ENCODE measurements at regions of chr11 and their contacts with region 1.

Region 1: GRCh38 chr11:38448284-38448683 is 1850.2 kb upstream of the RAG2 start:
- DNase-seq: no peak
- H3K4me3 ChIP-seq: no peak overlapping the region
- H3K27ac ChIP-seq: no peak overlapping the region
- H3K4me1 ChIP-seq: no peaks in the 10 kb centered on the region
- H3K27me3 ChIP-seq: no peaks in the 10 kb centered on the region
- CTCF ChIP-seq: no peak
- EP300 ChIP-seq: no peak
- POLR2A ChIP-seq: no peak

Region 2: DNA sequence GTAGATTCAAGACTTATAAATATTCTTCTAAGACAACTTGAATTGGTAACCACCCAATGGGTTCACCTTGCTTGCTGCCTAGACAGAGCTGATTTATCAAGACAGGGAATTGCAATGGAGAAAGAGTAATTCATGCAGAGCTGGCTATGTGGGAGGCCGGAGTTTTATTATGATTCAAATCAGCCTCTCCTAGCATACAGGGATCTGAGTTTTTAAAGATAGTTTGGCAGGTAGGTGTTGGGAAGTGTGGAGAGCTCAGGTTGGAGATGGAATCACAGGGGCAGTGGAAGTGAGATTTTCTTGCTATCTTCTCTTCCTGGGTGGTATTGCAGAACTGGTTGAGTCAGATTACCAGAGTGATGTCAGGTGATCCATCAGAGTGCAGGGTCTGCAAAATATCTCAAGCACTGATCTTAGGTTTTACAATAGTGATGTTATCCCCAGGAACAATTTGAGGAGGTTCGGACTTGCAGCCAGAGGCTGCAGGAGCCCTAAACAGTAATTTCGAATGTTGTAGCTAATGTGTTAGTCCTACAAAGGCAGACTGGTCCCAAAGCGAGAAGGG is 401.6 kb before region 1 on chr11:
- in situ Hi-C with region 1: no loop called
- intact Hi-C with region 1: no loop called
- DNase-seq: no peak
- H3K4me3 ChIP-seq: no peak overlapping the region
- H3K27ac ChIP-seq: no peak overlapping the region
- H3K4me1 ChIP-seq: no peaks in the 10 kb centered on the region
- H3K27me3 ChIP-seq: no peaks in the 10 kb centered on the region
- CTCF ChIP-seq: no peak
- EP300 ChIP-seq: no peak
- POLR2A ChIP-seq: no peak

Region 3: GRCh38 chr11:38254913-38255312 is 193.4 kb before region 1 on chr11:
- in situ Hi-C with region 1: no loop called
- intact Hi-C with region 1: loop called (anchors 5 kb)
- DNase-seq: no peak
- H3K4me3 ChIP-seq: no peak overlapping the region
- H3K27ac ChIP-seq: no peak overlapping the region
- H3K4me1 ChIP-seq: no peaks in the 10 kb centered on the region
- H3K27me3 ChIP-seq: no peaks in the 10 kb centered on the region
- CTCF ChIP-seq: no peak
- EP300 ChIP-seq: no peak
- POLR2A ChIP-seq: no peak

Region 4: GRCh38 chr11:38553148-38553547 is 104.9 kb after region 1 on chr11:
- in situ Hi-C with region 1: no loop called
- intact Hi-C with region 1: no loop called
- DNase-seq: no peak
- H3K4me3 ChIP-seq: no peak overlapping the region
- H3K27ac ChIP-seq: no peak overlapping the region
- H3K4me1 ChIP-seq: no peaks in the 10 kb centered on the region
- H3K27me3 ChIP-seq: no peaks in the 10 kb centered on the region
- CTCF ChIP-seq: no peak
- EP300 ChIP-seq: no peak
- POLR2A ChIP-seq: no peak

Measured in transverse colon (tissue), 4 donors.